WTC11 (cell line): ENCODE measurements at regions of chr17 and their contacts with region 1.

Region 1: GRCh38 chr17:69607162-69607834 is 192.8 kb downstream of the MAP2K6 start:
- DNase-seq: peak; percentile 70
- ATAC-seq: peak; percentile 91
- H3K4me3 Mint-ChIP-seq: no peak overlapping the region
- H3K27ac Mint-ChIP-seq: peak overlapping the region; percentile 96
- H3K4me1 Mint-ChIP-seq: peaks cover 11% of the 10 kb centered on the region
- H3K27me3 Mint-ChIP-seq: no peaks in the 10 kb centered on the region
- CTCF ChIP-seq: peak; percentile 80

Region 2: GRCh38 chr17:69574257-69575197 is 32.8 kb before region 1 on chr17:
- CTCF ChIA-PET with region 1: interaction called, 22 read pairs
- POLR2A ChIA-PET with region 1: no interaction called
- DNase-seq: no peak
- ATAC-seq: peak; percentile 65
- H3K4me3 Mint-ChIP-seq: no peak overlapping the region
- H3K27ac Mint-ChIP-seq: no peak overlapping the region
- H3K4me1 Mint-ChIP-seq: peaks cover 26% of the 10 kb centered on the region
- H3K27me3 Mint-ChIP-seq: peaks cover 10% of the 10 kb centered on the region
- CTCF ChIP-seq: no peak

Region 3: DNA sequence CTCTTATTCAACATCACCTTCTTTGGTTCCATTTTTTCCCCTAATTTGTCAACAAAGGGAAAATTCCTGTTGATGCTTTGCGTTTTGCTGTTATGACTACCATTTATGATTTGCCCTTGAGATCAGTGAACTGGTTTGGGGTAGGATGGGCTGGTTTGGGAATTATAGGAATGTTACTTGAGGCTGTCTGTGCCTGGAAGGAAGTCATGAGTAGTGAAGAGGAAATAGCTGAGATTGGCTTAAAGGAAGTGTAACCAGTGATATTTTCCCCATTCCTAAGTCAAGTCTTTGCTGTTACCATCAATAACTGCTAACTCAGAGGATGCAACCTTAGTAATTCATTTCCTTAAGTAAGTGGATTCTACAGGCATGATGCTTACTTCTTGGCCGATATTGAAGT is 13.6 kb before region 1 on chr17:
- CTCF ChIA-PET with region 1: interaction called, 18 read pairs
- POLR2A ChIA-PET with region 1: no interaction called
- DNase-seq: no peak
- ATAC-seq: no peak
- H3K4me3 Mint-ChIP-seq: no peak overlapping the region
- H3K27ac Mint-ChIP-seq: no peak overlapping the region
- H3K4me1 Mint-ChIP-seq: peaks cover 3% of the 10 kb centered on the region
- H3K27me3 Mint-ChIP-seq: peaks cover 3% of the 10 kb centered on the region; the same call in 1 of the 2 replicates
- CTCF ChIP-seq: no peak

Region 4: DNA sequence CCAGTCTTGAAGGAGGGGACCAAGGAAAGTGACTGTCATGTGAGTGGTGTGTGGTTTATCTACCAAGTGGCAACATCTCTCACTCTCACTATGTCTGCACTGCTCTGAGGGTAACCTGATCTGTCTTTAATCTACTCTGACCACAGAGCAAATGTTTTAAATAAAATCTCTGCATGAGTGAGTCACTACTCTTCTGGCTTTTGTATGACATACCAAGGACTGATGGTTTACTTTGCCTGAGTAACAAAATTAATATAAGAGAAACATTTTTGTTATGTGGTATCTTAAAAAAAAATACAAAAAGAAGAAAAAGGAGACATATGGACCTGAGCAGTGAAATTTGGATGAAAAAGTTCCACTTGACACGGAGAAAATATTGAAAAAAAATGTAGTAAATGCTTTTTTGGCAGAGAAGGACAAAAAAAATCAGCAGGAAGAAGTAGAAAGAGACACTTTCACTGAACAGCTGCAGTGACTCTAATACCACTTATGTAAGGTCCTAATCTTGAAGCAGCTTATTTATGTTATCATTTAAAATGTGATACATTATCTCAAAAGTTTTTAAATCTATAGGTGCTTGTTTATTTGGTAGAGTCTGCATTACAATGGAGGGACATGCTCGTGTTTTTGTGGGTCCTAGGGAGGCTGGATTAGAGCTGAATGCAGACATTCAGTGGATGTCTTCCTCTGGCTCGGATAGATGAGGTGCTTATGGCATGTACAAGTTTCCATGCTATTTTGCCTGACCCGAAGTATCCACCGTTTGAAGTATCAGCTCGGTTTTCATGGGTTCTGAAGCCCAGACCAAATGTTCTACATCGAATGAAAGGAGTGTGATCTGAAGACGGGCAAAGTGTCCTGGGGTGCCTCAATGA is 47.9 kb after region 1 on chr17:
- CTCF ChIA-PET with region 1: no interaction called
- POLR2A ChIA-PET with region 1: no interaction called
- DNase-seq: no peak
- ATAC-seq: no peak
- H3K4me3 Mint-ChIP-seq: no peak overlapping the region
- H3K27ac Mint-ChIP-seq: no peak overlapping the region
- H3K4me1 Mint-ChIP-seq: peaks cover 7% of the 10 kb centered on the region
- H3K27me3 Mint-ChIP-seq: no peaks in the 10 kb centered on the region; the same call in 1 of the 2 replicates
- CTCF ChIP-seq: no peak

Region 5: DNA sequence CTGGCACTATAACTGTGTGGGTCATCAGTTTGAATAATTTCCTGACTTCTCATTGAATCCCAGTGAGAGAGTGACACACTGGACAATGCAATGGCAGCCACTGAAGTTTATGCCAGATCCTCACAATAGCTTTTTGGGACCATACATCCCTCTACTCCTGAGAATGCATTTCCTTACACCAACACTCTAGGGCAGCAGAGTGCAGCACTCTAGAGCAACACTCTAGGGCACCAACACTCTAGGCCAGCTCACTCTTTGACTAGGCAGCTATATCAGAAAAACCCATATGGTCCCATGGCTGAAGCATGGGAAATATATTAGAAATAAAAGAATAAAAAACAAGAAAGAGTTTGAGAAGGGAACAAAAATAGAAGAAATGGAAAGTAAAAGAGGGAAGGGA is 116.4 kb after region 1 on chr17:
- CTCF ChIA-PET with region 1: interaction called, 16 read pairs
- POLR2A ChIA-PET with region 1: no interaction called
- DNase-seq: no peak
- ATAC-seq: peak; percentile 83
- H3K4me3 Mint-ChIP-seq: no peak overlapping the region
- H3K27ac Mint-ChIP-seq: no peak overlapping the region
- H3K4me1 Mint-ChIP-seq: peaks cover 4% of the 10 kb centered on the region
- H3K27me3 Mint-ChIP-seq: no peaks in the 10 kb centered on the region
- CTCF ChIP-seq: no peak

Region 6: DNA sequence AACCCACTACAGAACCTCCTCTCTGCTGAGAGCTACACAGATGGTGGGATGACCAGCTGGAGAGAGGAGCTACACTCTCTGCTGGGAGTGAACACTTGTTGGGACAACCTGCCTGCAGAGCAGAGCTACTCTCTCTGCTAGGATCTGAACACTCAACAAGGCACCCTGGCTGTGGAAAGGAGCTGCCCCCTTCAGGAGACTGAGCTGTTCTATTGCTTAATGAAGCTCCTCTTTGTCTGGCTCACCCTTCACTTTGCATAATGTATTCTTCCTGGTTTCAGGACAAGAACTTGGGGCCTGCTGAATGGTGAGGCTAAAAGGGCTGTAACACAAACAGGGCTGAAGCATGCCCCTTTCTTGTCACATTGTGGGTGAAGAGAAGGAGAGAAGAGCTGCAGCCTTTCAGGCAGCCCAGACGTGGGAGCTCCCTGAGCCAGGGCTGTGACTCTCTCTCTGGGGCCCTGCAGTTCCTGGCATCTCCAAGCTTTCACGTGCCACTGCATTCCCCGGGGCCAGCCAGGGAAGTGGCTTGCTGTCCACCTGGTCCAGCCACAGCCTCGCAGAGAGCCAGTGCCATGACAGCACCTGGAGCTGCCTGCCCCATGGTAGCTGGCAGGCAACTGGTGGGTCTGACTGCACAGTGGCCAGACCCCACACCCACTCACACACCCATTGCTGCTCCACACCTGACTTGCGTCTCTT is 194.9 kb after region 1 on chr17:
- CTCF ChIA-PET with region 1: interaction called, 35 read pairs
- POLR2A ChIA-PET with region 1: no interaction called
- DNase-seq: no peak
- ATAC-seq: peak; percentile 93
- H3K4me3 Mint-ChIP-seq: no peak overlapping the region
- H3K27ac Mint-ChIP-seq: no peak overlapping the region
- H3K4me1 Mint-ChIP-seq: peaks cover 9% of the 10 kb centered on the region; the same call in 1 of the 2 replicates
- H3K27me3 Mint-ChIP-seq: no peaks in the 10 kb centered on the region
- CTCF ChIP-seq: no peak

Region 7: GRCh38 chr17:70139449-70139993 is 532.2 kb after region 1 on chr17:
- CTCF ChIA-PET with region 1: interaction called, 10 read pairs
- POLR2A ChIA-PET with region 1: no interaction called
- DNase-seq: no peak
- ATAC-seq: no peak
- H3K4me3 Mint-ChIP-seq: no peak overlapping the region
- H3K27ac Mint-ChIP-seq: no peak overlapping the region
- H3K4me1 Mint-ChIP-seq: peaks cover 14% of the 10 kb centered on the region
- H3K27me3 Mint-ChIP-seq: no peaks in the 10 kb centered on the region
- CTCF ChIP-seq: no peak